Posterior vena cava (tissue), 2 donors: ENCODE measurements at regions of chr10 and their contacts with region 1.

Region 1: DNA sequence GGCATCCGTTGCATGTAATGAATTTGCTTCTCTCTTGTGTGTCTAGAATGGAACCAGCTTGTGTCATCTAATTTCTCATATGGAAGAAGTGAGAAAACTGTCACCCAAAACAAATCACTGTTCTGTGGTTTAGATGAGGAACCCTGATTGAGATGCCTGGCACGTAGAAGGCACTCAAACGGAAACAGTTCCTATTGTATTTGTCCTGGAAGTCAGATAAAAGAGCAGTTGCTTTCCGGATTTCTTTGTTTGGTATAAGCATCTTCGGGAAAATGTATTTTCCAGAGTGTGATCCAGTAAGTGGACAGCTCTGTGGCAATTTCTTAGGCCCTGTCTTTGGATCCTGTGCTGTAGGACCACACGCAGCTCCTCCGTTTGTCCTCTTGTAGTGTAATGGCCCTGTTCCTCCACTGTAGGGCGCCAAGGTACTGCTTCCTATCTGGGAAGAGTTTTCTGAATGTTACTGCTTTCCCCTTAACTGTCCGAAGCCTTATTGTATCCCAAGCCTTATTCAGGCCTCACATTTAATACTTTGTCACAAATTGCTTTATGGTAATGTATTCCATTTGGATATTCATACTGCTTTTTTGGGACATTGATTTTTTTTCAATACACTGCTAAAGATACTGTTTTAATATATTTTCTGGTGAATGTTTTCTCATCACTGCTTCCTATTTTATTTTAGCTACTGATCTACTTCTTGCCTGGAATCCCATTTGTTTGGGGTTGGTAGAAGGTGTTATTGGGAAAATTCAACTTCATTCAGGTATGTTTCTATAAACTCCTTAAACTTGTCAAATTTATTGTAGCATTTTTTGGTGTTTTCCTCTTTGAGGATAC is 24.8 kb downstream of the INPP5F start:
- DNase-seq: peak; percentile 82

Region 2: DNA sequence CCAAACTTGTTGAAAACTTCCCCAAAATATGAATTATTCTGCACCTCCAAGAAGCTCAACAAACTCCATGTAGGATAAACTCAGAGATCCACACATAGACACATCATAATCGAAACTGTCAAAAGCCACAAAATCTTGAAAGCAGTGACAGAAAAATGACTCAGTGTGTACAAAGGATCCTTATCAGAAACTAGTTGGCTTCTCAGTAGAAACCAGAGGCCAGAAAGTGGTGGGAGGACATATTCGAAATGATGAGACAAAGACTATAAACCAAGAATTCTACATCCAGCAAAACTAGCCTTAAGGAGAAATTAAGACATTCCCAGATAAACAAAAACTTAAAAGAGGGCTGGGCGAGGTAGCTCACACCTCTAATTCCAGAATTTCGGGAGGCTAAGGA is 83.6 kb after region 1 on chr10:
- intact Hi-C with region 1: loop called in 1 of 2 experiments (anchors 10 kb)
- DNase-seq: no peak